H1 (cell line): ENCODE measurements at regions of chr1 and their contacts with region 1.

Region 1: GRCh38 chr1:112744009-112744578 is 29.0 kb upstream of the PPM1J start:
- DNase-seq: peak in 1 of 2 experiments; percentile 86
- H3K4me3 ChIP-seq: peak overlapping the region; percentile 39 to 59 (median 50)
- H3K27ac ChIP-seq: no peak overlapping the region
- H3K4me1 ChIP-seq: peaks cover 0 to 7% (median 5%) of the 10 kb centered on the region in 4 experiments; a peak in 4 of 7 replicates
- H3K27me3 ChIP-seq: peaks cover 9 to 34% (median 27%) of the 10 kb centered on the region in 4 experiments
- CTCF ChIP-seq: peak; percentile 47 to 51 (median 51)
- EP300 ChIP-seq: no peak
- POLR2A ChIP-seq: no peak
- RAD21 ChIP-seq: peak; percentile 35 to 52; a peak in 2 of 4 replicates

Region 2: DNA sequence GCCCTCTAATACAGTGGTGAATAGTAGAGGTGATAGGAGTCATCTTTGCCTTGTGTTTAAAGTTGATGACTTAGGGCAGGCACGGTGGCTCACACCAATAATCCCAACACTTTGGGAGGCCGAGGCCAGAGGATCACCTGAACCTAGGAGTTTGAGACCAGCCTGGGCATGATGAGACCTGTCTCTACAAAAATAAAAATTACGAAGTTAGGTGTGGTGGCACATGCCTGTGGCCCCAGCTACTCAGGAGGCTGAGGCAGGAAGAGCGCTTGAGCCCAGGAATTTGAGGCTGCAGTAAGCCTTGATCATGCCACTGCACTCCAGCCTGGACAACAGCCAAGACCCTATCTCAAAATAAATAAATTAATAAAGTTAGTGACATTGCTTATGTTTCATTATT is 97.9 kb before region 1 on chr1:
- CTCF ChIA-PET with region 1: no interaction called
- POLR2A ChIA-PET with region 1: no interaction called
- DNase-seq: no peak
- H3K4me3 ChIP-seq: no peak overlapping the region
- H3K27ac ChIP-seq: no peak overlapping the region
- H3K4me1 ChIP-seq: no peaks in the 10 kb centered on the region
- H3K27me3 ChIP-seq: no peaks in the 10 kb centered on the region
- CTCF ChIP-seq: no peak
- EP300 ChIP-seq: no peak
- POLR2A ChIP-seq: no peak
- RAD21 ChIP-seq: no peak

Region 3: DNA sequence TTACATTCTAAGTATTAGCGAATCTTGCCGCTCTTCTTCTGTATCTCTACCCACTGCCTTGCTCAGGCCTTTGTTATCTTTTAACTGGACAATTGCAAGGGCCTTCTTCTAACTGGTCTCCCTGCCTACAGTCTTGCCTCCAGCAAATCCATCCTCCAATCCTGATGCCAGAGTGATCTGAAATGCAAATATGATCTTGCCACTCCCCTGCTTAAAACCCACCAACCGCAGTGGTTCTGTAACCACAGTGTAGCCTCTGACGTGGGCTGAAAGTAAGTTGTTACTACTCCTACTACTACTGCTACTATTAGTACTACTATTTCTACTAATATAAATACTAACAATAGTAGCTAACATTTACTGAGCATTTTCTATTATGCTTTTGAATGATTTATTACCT is 57.3 kb before region 1 on chr1:
- CTCF ChIA-PET with region 1: no interaction called
- POLR2A ChIA-PET with region 1: no interaction called
- DNase-seq: no peak
- H3K4me3 ChIP-seq: no peak overlapping the region
- H3K27ac ChIP-seq: no peak overlapping the region
- H3K4me1 ChIP-seq: peaks cover 0 to 2% (median 0%) of the 10 kb centered on the region in 4 experiments; a peak in 2 of 7 replicates
- H3K27me3 ChIP-seq: no peaks in the 10 kb centered on the region
- CTCF ChIP-seq: no peak
- EP300 ChIP-seq: no peak
- POLR2A ChIP-seq: no peak
- RAD21 ChIP-seq: no peak

Region 4: DNA sequence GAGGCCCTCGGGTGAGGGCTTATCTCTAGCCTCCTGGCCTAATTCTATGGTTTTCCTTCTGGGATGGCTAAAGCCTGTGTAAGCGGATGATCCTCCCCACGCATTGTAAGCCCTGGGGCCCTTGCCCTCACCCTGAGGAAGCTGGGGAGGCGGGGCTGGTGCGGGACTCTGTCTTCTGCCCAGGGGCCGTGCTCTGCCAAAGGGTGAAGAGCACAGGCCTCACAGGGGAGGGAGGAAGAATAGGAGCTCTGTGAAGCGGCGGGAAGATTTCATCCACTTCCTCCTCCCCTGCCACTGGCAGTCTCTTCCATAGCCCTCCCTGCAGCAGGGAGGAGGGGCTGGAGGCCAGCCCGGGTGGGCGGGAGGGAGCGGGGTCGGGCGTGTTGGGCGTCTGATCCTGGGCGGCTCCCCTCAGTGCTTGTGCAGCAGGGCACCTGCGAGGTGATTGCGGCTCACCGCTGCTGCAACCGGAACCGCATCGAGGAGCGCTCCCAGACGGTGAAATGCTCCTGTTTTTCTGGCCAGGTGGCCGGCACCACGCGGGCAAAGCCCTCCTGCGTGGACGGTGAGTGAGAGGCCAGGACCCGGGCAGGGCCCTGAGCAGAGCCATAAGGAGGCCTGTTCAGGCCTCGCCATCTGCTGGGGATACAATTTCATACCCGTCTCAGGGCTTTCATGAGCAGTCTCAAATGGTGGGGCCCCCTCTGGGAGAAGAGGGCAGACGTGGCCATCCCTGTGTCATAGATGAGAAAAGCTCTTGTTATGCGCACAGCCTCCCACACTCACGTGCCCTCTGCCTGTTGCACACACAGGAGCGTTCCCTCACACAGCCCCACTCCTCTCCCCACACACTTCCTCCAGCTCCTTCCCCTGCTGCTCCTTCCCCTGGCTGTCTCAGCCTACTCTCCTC is 21.2 kb before region 1 on chr1:
- CTCF ChIA-PET with region 1: interaction called, 73 read pairs
- POLR2A ChIA-PET with region 1: interaction called, 15 read pairs
- DNase-seq: peak in 1 of 2 experiments; percentile 68
- H3K4me3 ChIP-seq: peak overlapping the region in 2 of 4 experiments; percentile 18 to 52; a peak in 5 of 8 replicates
- H3K27ac ChIP-seq: no peak overlapping the region
- H3K4me1 ChIP-seq: peaks cover 8 to 21% (median 16%) of the 10 kb centered on the region in 4 experiments
- H3K27me3 ChIP-seq: peaks cover 0 to 26% (median 16%) of the 10 kb centered on the region in 4 experiments; a peak in 5 of 7 replicates
- CTCF ChIP-seq: no peak
- EP300 ChIP-seq: no peak
- POLR2A ChIP-seq: no peak
- RAD21 ChIP-seq: no peak

Region 5: GRCh38 chr1:112754116-112754628 is 10.1 kb after region 1 on chr1:
- CTCF ChIA-PET with region 1: interaction called, 16 read pairs
- POLR2A ChIA-PET with region 1: no interaction called
- DNase-seq: no peak
- H3K4me3 ChIP-seq: no peak overlapping the region
- H3K27ac ChIP-seq: no peak overlapping the region
- H3K4me1 ChIP-seq: no peaks in the 10 kb centered on the region
- H3K27me3 ChIP-seq: no peaks in the 10 kb centered on the region; a peak in 1 of 7 replicates
- CTCF ChIP-seq: no peak
- EP300 ChIP-seq: no peak
- POLR2A ChIP-seq: no peak
- RAD21 ChIP-seq: no peak

Region 6: DNA sequence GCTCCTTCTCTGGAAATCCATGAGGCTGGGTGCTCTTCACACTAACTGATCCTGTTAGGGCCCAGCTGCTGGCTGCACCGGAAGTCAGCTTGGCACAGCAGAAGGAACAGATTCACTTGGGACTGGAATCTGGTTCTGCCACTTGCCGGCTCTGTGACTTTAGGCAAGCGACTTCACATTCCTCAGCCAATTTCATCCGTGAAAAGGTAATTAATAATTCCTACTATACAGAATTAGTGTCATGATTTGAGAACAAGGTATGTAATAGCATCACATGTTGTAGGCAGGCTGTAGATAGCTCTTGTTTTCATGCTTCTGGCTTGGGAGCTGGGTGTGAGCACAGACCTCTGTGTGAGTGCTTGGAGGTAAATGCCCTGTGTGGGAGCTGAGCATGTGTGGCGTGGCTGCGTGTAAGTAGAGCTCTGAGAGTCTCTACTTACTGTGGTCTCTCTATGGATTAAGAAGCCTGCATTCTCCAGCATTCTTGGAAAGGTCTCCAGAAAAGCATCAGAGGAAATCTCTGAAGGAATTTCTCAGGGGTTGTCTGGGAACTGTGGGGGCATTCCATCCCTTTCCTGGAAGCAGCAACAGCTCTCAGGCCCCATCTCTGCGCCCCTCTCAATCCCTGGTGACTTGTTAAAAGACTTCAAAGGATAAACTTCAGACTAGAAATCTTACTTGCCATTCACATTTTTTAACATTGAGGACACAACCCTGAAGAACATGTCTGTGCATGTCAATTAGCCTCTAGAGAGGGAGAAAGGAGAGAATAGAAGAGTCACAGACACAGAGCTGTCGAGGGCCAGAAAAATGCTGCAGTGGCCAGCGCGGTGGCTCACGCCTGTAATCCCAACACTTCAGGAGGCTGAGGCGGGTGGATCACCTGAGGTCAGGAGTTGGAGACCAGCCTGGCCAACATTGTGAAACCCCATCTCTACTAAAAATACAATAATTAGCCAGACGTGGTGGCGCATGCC is 18.7 kb after region 1 on chr1:
- CTCF ChIA-PET with region 1: interaction called, 11 read pairs
- POLR2A ChIA-PET with region 1: no interaction called
- DNase-seq: no peak
- H3K4me3 ChIP-seq: no peak overlapping the region
- H3K27ac ChIP-seq: no peak overlapping the region
- H3K4me1 ChIP-seq: peaks cover 0 to 4% (median 0%) of the 10 kb centered on the region in 4 experiments; a peak in 4 of 7 replicates
- H3K27me3 ChIP-seq: no peaks in the 10 kb centered on the region; a peak in 2 of 7 replicates
- CTCF ChIP-seq: no peak
- EP300 ChIP-seq: no peak
- POLR2A ChIP-seq: no peak
- RAD21 ChIP-seq: no peak

Region 7: DNA sequence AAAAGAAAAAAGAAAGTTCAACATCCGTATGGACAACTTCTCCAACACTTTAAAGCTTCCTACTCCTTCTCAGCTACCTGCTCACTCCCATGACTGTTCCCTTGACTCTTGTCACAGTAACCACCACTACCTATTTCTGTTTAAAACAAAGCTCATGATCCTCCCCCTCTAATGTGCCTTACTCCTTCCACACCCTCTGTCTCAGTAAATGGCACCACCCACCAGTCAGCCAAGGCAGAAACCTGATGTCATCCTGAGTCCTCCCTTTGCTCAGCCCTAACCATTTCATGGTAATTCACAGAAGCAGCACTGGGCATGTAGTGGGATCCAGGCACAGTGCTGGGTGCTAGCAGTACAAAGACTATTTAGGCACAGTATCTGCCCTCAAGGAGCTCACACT is 34.0 kb after region 1 on chr1:
- CTCF ChIA-PET with region 1: no interaction called
- POLR2A ChIA-PET with region 1: no interaction called
- DNase-seq: no peak
- H3K4me3 ChIP-seq: no peak overlapping the region
- H3K27ac ChIP-seq: no peak overlapping the region
- H3K4me1 ChIP-seq: no peaks in the 10 kb centered on the region
- H3K27me3 ChIP-seq: no peaks in the 10 kb centered on the region; a peak in 1 of 7 replicates
- CTCF ChIP-seq: no peak
- EP300 ChIP-seq: no peak
- POLR2A ChIP-seq: no peak
- RAD21 ChIP-seq: no peak

Region 8: GRCh38 chr1:112794654-112795239 is 50.7 kb after region 1 on chr1:
- CTCF ChIA-PET with region 1: interaction called, 10 read pairs
- POLR2A ChIA-PET with region 1: no interaction called
- DNase-seq: no peak
- H3K4me3 ChIP-seq: no peak overlapping the region
- H3K27ac ChIP-seq: 0 out of 2 replicates have a peak overlapping the region, but pooled peaks have one; percentile 52
- H3K4me1 ChIP-seq: peaks cover 2 to 25% (median 14%) of the 10 kb centered on the region in 4 experiments
- H3K27me3 ChIP-seq: no peaks in the 10 kb centered on the region; a peak in 1 of 7 replicates
- CTCF ChIP-seq: no peak
- EP300 ChIP-seq: no peak
- POLR2A ChIP-seq: no peak
- RAD21 ChIP-seq: no peak